Activated T-helper 1 cell treated with anti-CD3 and anti-CD28 coated beads, Interleukin-12 subunit alpha, Interleukin-12 subunit beta, Interleukin-2, Interleukin-4 antibody, amounts not matched to agents 30 ng/mL and 10 ng/mL and 1 ng/mL, durations not matched to agents 14 hours and 24 hours and 36 hours (primary cell): ENCODE measurements at regions of chr2 and their contacts with region 1.

Region 1: DNA sequence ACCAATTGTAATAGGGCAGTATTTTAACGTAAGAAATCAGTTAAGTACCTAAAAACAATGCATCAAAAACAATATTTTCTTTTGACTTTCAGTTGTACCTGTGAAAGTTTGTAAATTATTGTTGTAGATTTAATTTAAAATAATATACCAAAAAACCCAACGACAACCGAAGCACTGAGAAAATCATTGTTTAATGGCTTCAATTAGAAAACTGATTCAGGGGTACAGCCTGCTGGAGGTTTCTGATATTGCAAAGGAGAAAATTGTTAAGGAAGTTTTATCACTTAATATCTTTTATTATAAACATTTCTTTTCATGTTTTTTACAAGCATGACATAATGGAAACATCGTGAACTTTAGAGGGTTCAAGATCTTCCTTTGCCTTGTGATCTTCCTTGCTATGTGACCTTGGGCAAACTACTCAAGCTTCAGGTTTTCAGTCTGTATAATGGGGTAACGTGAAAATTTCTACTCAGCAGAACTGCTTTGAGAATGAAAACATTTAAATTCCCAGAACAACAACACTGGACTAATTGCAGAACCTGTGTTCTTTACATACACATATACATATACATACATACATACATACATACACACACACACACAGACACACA is 76.3 kb upstream of the GLS start:
- DNase-seq: no peak
- H3K4me3 Mint-ChIP-seq: no peak overlapping the region
- H3K27ac Mint-ChIP-seq: no peak overlapping the region
- H3K4me1 Mint-ChIP-seq: peaks cover 22% of the 10 kb centered on the region
- H3K27me3 Mint-ChIP-seq: no peaks in the 10 kb centered on the region

Region 2: DNA sequence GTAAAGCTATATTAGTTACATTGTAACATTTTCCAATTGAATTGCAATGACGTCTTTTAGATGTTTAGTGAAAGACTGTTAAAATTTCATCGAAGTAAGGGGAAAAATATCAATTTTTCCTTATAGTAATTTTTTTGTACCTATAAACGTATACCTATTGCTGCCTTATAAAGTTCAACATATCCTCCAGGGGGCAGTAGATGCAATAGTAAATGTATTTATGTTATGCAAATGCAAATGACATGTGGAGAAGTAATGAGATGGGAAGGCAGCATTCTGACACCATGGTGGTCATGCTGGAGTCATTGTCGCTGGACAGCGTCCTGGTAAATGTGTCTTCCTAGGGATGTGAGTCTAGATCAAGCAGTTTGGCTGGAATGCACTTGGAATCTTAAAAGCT is 780.4 kb before region 1 on chr2:
- intact Hi-C with region 1: loop called (anchors 5 kb)
- DNase-seq: no peak
- H3K4me3 Mint-ChIP-seq: no peak overlapping the region
- H3K27ac Mint-ChIP-seq: no peak overlapping the region
- H3K4me1 Mint-ChIP-seq: no peaks in the 10 kb centered on the region
- H3K27me3 Mint-ChIP-seq: peaks cover 13% of the 10 kb centered on the region

Region 3: DNA sequence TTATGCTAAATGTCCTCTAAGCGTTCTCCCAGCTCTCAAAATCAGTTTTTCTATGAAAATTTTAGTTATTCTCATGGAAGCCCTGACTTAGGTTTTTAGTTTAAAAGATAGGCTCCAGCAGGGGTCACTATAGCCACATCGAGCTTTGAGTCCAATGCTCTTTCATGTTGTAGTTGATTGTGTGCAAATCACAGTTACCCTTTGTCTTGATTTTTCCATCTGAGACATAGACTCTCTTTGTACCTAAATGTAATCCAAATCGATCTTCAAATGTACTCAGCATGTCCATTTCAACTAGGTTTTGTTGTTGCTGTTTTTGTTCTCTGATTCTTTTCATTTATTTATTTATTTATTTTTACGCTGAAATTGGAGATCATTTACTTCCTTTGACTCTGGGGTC is 715.4 kb before region 1 on chr2:
- intact Hi-C with region 1: loop called (anchors 2 kb)
- DNase-seq: peak; percentile 14
- H3K4me3 Mint-ChIP-seq: no peak overlapping the region
- H3K27ac Mint-ChIP-seq: no peak overlapping the region
- H3K4me1 Mint-ChIP-seq: no peaks in the 10 kb centered on the region
- H3K27me3 Mint-ChIP-seq: no peaks in the 10 kb centered on the region

Region 4: DNA sequence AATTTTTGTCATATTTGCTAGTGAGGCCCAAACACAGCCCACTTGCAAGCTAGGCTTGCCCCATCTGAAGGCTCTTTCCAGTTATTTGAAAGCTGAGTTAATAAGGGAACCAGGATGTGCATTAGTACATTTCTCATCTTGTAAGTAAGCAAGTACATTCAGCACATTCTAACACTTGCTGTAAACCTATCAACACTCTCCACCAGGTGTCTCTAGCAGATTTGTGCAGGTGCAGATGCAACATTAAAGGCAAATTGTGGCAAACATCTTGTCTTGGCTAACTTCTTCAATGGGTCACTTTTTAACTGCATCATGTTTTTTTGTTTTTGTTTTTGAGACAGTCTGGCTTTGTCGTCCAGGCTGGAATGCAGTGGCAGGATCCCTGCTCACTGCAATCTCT is 421.4 kb before region 1 on chr2:
- intact Hi-C with region 1: loop called (anchors 1 kb)
- DNase-seq: peak; percentile 32
- H3K4me3 Mint-ChIP-seq: no peak overlapping the region
- H3K27ac Mint-ChIP-seq: no peak overlapping the region
- H3K4me1 Mint-ChIP-seq: peaks cover 9% of the 10 kb centered on the region
- H3K27me3 Mint-ChIP-seq: peaks cover 2% of the 10 kb centered on the region

Region 5: DNA sequence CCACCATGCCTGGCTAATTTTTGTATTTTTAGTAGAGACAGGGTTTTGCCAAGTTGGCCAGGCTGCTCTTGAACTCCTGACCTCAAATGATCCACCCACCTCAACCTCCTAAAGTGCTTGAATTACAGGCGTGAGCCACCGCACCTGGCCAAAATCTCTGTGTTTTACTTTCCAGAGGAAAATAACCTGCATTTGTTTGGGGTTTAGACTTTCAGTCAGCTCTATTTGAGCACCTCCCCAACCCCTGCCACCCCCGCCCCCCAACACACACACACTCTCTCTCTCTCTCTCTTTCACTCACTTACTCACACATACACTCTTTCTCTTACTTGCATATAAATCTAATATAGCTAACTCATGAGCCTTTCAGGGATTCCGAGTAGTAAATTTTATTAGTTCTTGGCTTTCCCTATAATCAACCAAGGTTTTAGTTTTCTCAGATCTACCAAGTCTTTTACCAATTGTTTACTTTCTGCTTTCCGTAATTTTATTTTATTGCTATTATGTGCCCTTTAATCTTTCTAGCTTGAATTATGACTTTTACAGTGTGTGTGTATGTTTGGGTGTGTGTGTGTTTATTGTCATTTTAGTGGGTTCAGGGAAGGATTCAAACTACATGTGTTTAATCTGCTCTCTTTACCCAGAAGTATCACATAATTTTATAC is 371.6 kb before region 1 on chr2:
- intact Hi-C with region 1: no loop called
- DNase-seq: no peak
- H3K4me3 Mint-ChIP-seq: no peak overlapping the region
- H3K27ac Mint-ChIP-seq: peak overlapping the region; percentile 41
- H3K4me1 Mint-ChIP-seq: peaks cover 54% of the 10 kb centered on the region
- H3K27me3 Mint-ChIP-seq: no peaks in the 10 kb centered on the region

Region 6: DNA sequence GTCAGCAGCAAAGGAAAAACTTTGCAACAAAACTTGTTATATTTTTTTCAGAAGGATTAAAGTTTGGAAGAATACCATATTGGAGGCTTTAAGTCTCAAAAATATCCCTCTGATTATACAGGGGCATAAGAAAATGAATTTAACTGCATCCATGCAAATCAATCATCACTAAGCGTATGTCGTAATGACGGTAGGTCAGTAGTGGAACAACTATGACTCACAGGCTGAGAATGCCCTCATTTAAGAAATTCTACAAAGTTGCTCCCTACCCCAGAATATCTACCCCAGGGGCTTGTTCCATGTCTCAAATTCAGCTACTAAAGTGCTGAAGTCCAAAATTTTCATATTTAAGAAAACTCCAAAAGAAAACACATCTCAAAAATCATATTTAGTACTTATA is 167.9 kb before region 1 on chr2:
- intact Hi-C with region 1: loop called (anchors 1 kb)
- DNase-seq: no peak
- H3K4me3 Mint-ChIP-seq: no peak overlapping the region
- H3K27ac Mint-ChIP-seq: no peak overlapping the region
- H3K4me1 Mint-ChIP-seq: peaks cover 9% of the 10 kb centered on the region
- H3K27me3 Mint-ChIP-seq: no peaks in the 10 kb centered on the region

Region 7: DNA sequence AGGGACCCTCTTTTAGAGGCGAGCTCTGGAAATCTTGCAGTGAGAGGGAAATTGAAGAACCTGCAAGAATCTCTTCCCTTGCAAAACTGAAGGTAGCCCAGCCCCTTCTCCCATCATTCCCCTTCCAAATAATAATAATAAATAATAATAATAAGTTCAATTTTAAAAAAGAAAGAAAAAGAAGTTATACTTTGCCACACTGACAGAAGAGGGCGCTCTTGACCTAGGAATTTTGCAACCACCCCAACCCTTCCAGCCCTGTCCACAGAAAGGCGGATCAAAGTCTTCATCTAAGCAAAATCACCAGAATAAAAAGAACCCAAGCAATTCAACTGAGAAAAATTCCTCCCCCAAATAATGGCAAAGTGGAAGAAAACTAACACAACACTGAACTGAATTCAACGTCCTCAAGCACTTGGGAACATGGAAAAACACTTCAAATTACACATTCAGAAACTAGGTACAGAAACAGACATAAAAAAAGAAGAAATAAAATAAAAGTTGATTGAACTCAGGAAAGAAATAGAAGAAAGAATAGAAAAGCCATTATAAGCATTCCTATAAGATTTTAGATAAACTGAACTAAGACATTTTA is 22.6 kb before region 1 on chr2:
- intact Hi-C with region 1: loop called (anchors 1 kb)
- DNase-seq: peak; percentile 11
- H3K4me3 Mint-ChIP-seq: no peak overlapping the region
- H3K27ac Mint-ChIP-seq: peak overlapping the region; percentile 45
- H3K4me1 Mint-ChIP-seq: peaks cover 43% of the 10 kb centered on the region
- H3K27me3 Mint-ChIP-seq: no peaks in the 10 kb centered on the region

Region 8: GRCh38 chr2:190791347-190791975 is 12.8 kb before region 1 on chr2:
- intact Hi-C with region 1: loop called (anchors 2 kb)
- DNase-seq: no peak
- H3K4me3 Mint-ChIP-seq: peak overlapping the region; percentile 19
- H3K27ac Mint-ChIP-seq: peak overlapping the region; percentile 74
- H3K4me1 Mint-ChIP-seq: peaks cover 76% of the 10 kb centered on the region
- H3K27me3 Mint-ChIP-seq: no peaks in the 10 kb centered on the region